T-cell (primary cell): ENCODE measurements at regions of chr5 and their contacts with region 1.

Region 1: DNA sequence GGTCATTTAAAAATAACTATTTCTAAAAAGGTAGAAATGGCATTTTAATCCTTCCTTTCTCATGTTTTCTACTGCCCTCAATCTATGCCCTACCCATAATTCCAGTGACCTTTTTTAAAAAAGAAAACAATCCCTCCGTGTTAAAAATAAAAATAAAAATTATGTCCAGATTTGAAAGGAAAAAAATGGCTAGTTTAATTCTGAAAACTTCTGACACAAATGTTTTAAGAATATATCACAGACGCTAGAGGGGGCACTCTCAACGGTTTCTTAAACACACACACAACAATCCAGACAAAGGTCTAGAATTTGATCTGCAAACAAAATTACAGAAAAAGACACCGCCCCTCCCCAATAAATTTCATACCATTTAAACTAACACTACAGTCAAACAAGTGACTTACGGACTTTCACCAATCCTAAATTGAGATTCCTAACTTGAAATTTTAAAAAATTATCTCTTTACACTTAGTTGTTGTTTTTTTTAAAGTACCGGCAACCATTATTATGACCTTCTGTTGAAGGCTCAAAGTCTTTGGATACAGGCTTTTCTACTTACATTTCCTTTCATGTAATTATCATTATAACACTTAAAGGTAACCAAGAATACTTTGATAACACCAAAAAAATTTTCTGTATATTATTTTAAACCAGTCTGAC is 38.2 kb downstream of the CLINT1 start:
- DNase-seq: peak in 10 of 35 experiments; percentile 3 to 60 (median 22)
- ATAC-seq: no peak
- H3K4me3 ChIP-seq: no peak overlapping the region
- H3K4me3 Mint-ChIP-seq: no peak overlapping the region
- H3K27ac ChIP-seq: no peak overlapping the region
- H3K27ac Mint-ChIP-seq: peak overlapping the region; percentile 64 to 72
- H3K4me1 ChIP-seq: no peaks in the 10 kb centered on the region
- H3K4me1 Mint-ChIP-seq: peaks cover 34 to 46% (median 43%) of the 10 kb centered on the region in 3 donors
- H3K27me3 ChIP-seq: no peaks in the 10 kb centered on the region
- H3K27me3 Mint-ChIP-seq: no peaks in the 10 kb centered on the region

Region 2: DNA sequence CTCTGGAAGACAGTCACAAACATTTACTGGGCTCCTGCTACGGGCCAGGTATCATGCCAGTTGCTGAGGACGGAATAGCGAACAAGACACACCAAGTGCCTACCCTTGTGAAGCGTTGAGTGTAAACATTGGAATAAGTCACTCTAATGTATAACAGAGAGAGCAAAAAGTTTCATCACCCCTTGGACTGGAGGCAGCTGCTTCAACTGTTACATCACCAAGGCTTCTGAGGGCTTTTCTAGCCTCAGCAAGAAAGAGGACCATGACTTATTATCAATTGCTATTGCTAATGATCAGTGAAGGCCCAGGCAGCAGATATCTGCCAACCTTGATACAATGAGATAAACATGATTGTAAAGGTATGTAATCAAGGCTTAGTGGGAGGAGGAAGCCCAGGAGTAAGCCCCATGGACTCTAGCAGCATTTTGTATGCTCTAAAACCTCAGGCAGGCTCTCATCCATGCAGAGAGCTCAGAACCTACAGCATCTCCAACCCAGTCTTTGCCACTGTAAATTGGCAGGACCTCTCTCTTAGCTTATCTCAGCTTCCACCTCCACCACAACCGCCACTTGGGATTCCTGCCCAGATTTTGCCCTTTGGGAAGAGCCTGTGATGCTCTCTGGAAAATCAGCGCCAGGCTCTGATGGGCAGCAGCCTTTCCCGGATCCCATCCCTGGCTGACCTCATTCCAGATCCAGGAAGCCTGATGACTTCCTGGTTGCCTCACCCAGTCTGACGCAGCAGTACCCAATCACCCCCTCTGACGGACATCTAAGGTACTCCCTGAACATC is 299.6 kb before region 1 on chr5:
- CTCF ChIA-PET with region 1: no interaction called
- POLR2A ChIA-PET with region 1: interaction called in 1 of 2 experiments, 10 read pairs
- DNase-seq: no peak
- ATAC-seq: no peak
- H3K4me3 ChIP-seq: no peak overlapping the region
- H3K4me3 Mint-ChIP-seq: no peak overlapping the region
- H3K27ac ChIP-seq: no peak overlapping the region
- H3K27ac Mint-ChIP-seq: peak overlapping the region; percentile 51 to 52
- H3K4me1 ChIP-seq: no peaks in the 10 kb centered on the region
- H3K4me1 Mint-ChIP-seq: peaks cover 0 to 33% (median 7%) of the 10 kb centered on the region in 3 donors
- H3K27me3 ChIP-seq: peaks cover 0 to 3% of the 10 kb centered on the region in 2 experiments
- H3K27me3 Mint-ChIP-seq: no peaks in the 10 kb centered on the region

Region 3: GRCh38 chr5:157994906-157995519 is 174.3 kb after region 1 on chr5:
- CTCF ChIA-PET with region 1: interaction called, 4 to 12 read pairs
- POLR2A ChIA-PET with region 1: no interaction called
- DNase-seq: peak in 32 of 35 experiments; percentile 2 to 62 (median 22)
- ATAC-seq: peak; percentile 69 to 81 (median 76)
- H3K4me3 ChIP-seq: peak overlapping the region in 1 of 2 donors; percentile 25
- H3K4me3 Mint-ChIP-seq: peak overlapping the region; percentile 14 to 53 (median 43)
- H3K27ac ChIP-seq: no peak overlapping the region
- H3K27ac Mint-ChIP-seq: no peak overlapping the region
- H3K4me1 ChIP-seq: peaks cover 12 to 23% of the 10 kb centered on the region in 2 experiments
- H3K4me1 Mint-ChIP-seq: peaks cover 18 to 22% (median 18%) of the 10 kb centered on the region in 3 donors
- H3K27me3 ChIP-seq: peaks cover 2 to 29% of the 10 kb centered on the region in 2 experiments
- H3K27me3 Mint-ChIP-seq: peaks cover 26 to 30% of the 10 kb centered on the region in 2 donors

Region 4: GRCh38 chr5:158373608-158374395 is 553.1 kb after region 1 on chr5:
- CTCF ChIA-PET with region 1: no interaction called
- POLR2A ChIA-PET with region 1: no interaction called
- DNase-seq: no peak
- ATAC-seq: no peak
- H3K4me3 ChIP-seq: no peak overlapping the region
- H3K4me3 Mint-ChIP-seq: no peak overlapping the region
- H3K27ac ChIP-seq: no peak overlapping the region
- H3K27ac Mint-ChIP-seq: no peak overlapping the region
- H3K4me1 ChIP-seq: no peaks in the 10 kb centered on the region
- H3K4me1 Mint-ChIP-seq: no peaks in the 10 kb centered on the region
- H3K27me3 ChIP-seq: no peaks in the 10 kb centered on the region
- H3K27me3 Mint-ChIP-seq: peaks cover 0 to 7% of the 10 kb centered on the region in 2 donors